CD4-positive, alpha-beta memory T cell (primary cell): ENCODE measurements at regions of chr13 and their contacts with region 1.

Region 1: DNA sequence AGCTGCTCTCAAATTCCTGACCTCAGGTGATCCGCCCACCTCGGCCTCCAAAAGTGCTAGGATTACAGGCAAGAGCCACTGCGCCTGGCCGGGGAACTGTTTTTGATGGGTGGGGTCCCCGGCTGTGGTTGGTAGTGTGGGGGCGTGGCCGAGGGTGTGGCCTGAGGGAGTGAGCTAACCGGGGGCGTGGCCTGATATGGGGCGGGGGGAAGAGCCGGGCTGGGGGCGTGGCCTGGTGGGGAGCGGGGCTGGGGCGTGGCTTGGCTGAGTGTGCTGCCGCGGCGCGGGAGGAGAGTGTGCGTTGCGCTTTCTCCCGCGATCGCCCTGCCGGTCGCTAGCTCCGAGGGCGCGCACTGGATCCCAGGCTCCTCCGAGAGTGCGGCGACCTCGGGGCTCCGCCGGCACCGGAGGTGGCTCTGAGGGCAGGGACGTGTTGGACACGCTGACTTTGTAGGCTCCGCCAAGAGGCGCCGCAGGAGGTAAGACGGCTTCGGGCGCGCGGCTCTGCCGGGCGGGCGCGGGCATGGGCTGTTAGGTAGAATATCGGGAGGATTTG is at the start of gene SPATA13:
- DNase-seq: peak; percentile 88 to 90 (median 88)
- H3K4me3 ChIP-seq: peak within 1 kb of the TSS; percentile 69
- H3K4me3 Mint-ChIP-seq: peak within 1 kb of the TSS; percentile 78 to 90 (median 86)
- H3K27ac ChIP-seq: peak within 1 kb of the TSS; percentile 19
- H3K27ac Mint-ChIP-seq: peak within 1 kb of the TSS in 5 of 7 donors; percentile 32 to 83 (median 72)
- H3K4me1 ChIP-seq: peaks cover 19% of the 10 kb centered on the region
- H3K4me1 Mint-ChIP-seq: peaks cover 9 to 16% (median 12%) of the 10 kb centered on the region in 4 donors
- H3K27me3 ChIP-seq: no peaks in the 10 kb centered on the region
- H3K27me3 Mint-ChIP-seq: peaks cover 0 to 2% of the 10 kb centered on the region in 2 donors
- total RNA-seq, gene SPATA13: 107 to 110 TPM

Region 2: DNA sequence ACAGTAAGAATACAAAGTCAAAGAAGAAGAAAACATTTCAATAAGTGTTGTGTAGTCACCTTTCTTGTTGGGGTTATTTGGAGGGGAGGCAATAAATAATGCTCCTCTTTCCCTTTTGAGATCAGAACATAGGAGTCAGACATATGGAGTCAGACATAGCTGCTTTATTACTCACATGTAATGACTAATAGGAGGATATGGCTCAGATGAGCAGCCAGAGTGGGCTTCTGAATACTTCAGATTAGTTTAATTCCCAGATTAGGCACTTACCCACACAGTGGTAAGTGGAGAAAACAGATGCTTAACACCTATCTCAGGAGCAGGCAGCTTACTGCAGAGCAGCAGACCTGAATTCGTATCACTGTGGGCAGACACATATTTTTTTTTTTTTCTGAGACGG is 231.5 kb before region 1 on chr13:
- CTCF ChIA-PET with region 1: no interaction called
- POLR2A ChIA-PET with region 1: no interaction called
- intact Hi-C with region 1: no loop called
- DNase-seq: no peak
- H3K4me3 ChIP-seq: no peak overlapping the region
- H3K4me3 Mint-ChIP-seq: no peak overlapping the region
- H3K27ac ChIP-seq: no peak overlapping the region
- H3K27ac Mint-ChIP-seq: no peak overlapping the region
- H3K4me1 ChIP-seq: no peaks in the 10 kb centered on the region
- H3K4me1 Mint-ChIP-seq: no peaks in the 10 kb centered on the region
- H3K27me3 ChIP-seq: no peaks in the 10 kb centered on the region
- H3K27me3 Mint-ChIP-seq: peaks cover 9 to 19% of the 10 kb centered on the region in 2 donors

Region 3: GRCh38 chr13:23980160-23980551 is 180.4 kb before region 1 on chr13:
- CTCF ChIA-PET with region 1: no interaction called
- POLR2A ChIA-PET with region 1: no interaction called
- intact Hi-C with region 1: loop called (anchors 1 kb)
- DNase-seq: peak; percentile 84 to 87 (median 86)
- H3K4me3 ChIP-seq: peak overlapping the region; percentile 42 to 60
- H3K4me3 Mint-ChIP-seq: peak overlapping the region; percentile 87 to 97 (median 90)
- H3K27ac ChIP-seq: peak overlapping the region; percentile 4
- H3K27ac Mint-ChIP-seq: peak overlapping the region; percentile 85 to 94 (median 93)
- H3K4me1 ChIP-seq: peaks cover 15% of the 10 kb centered on the region
- H3K4me1 Mint-ChIP-seq: peaks cover 6 to 16% (median 8%) of the 10 kb centered on the region in 4 donors
- H3K27me3 ChIP-seq: peaks cover 25% of the 10 kb centered on the region
- H3K27me3 Mint-ChIP-seq: peaks cover 13 to 20% of the 10 kb centered on the region in 2 donors